PC-9 (cell line): ENCODE measurements at regions of chr15 and their contacts with region 1.

Region 1: GRCh38 chr15:40593588-40594428 is at the start of gene KNL1:
- DNase-seq: peak; percentile 79 to 94
- H3K4me3 ChIP-seq: peak within 1 kb of the TSS; percentile 93
- H3K27ac ChIP-seq: peak within 1 kb of the TSS; percentile 88
- H3K4me1 ChIP-seq: peaks cover 8% of the 10 kb centered on the region; the same call in 1 of the 2 replicates
- H3K27me3 ChIP-seq: no peaks in the 10 kb centered on the region
- CTCF ChIP-seq: no peak
- total RNA-seq, gene KNL1: 16.2 and 27.5 TPM in 2 replicates

Region 2: DNA sequence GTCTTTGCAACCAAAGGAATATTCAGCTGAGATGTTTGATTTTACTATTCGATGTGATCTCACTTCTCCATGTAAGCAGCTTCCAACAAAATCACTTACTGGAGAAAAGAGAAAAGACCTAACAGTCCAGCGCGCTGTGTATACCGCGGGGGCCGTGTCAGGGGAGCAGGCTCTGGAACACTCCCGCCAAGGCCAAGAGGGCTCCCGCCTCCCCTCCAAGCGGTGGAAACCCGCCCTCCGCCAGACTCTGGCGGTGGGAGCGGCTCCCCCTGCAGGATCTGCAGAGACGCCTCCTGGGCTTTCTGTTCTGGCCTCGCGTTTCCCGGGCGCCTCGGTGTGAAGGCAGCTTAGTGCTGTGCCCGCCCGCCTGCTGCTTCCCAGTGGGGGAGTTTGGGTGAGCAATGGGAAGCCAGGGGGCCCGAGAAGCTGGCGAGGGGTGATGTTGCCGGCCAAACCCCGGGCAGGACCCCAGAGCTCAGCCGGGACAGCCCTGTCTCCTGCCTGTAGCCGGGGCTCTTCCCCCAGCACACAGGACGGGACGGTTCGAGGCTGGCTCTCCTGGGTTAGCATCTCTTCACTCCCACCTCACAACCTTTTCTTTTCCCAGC is 86.7 kb before region 1 on chr15:
- CTCF ChIA-PET with region 1: interaction called, 7 read pairs
- POLR2A ChIA-PET with region 1: interaction called, 36 read pairs
- intact Hi-C with region 1: no loop called
- DNase-seq: peak; percentile 47 to 69
- H3K4me3 ChIP-seq: no peak overlapping the region; the same call in 1 of the 2 replicates
- H3K27ac ChIP-seq: no peak overlapping the region
- H3K4me1 ChIP-seq: peaks cover 7% of the 10 kb centered on the region
- H3K27me3 ChIP-seq: no peaks in the 10 kb centered on the region
- CTCF ChIP-seq: peak; percentile 51